ENCODE measurements at regions of chr2 and their contacts with region 1.

Region 1: GRCh38 chr2:231674587-231675338 is 33.6 kb upstream of the PTMA start:
- DNase-seq: peak; percentile 74
- ATAC-seq: peak; percentile 73
- H3K4me3 Mint-ChIP-seq: no peak overlapping the region
- H3K27ac Mint-ChIP-seq: peak overlapping the region; percentile 57
- H3K4me1 Mint-ChIP-seq: peaks cover 36% of the 10 kb centered on the region
- H3K27me3 Mint-ChIP-seq: peaks cover 2% of the 10 kb centered on the region

Region 2: DNA sequence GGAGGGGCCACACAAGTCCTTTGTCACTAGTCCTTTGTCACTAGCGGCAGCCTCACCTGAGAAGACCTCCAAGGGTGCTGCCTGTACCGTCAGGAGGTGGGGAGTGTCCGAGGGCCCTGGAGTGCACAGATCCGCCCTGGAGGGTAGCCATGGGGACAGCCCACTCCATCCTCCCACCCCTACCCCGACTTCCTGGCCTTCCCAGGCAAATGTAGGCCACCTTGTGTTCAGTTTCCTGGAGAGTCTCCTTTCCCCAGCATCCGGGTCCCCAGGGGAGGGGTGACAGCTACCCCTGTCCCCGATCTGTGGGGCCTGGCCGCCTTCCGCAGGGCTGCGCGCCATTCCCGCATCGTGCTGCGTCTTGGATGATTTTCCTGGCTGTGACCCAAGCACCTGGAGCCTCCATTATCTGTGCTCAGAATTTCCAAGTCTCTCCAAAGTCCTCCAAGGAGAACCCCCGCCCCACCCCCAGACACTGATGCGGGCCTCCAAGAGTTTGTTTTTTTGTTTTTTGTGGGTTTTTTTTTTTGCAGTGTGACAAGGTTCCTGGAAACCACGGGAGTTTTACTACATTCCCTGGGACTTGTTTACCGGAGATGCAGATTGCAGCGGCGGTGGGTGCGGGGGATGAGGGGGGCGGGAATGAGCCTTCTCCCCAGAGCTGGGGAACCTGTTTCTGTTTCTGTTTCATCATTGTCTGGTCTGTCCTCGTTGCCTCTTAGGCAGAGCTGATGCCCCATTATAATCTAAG is 53.5 kb before region 1 on chr2:
- CTCF ChIA-PET with region 1: interaction called, 12 read pairs
- POLR2A ChIA-PET with region 1: no interaction called
- DNase-seq: no peak
- ATAC-seq: no peak
- H3K4me3 Mint-ChIP-seq: no peak overlapping the region
- H3K27ac Mint-ChIP-seq: no peak overlapping the region
- H3K4me1 Mint-ChIP-seq: peaks cover 37% of the 10 kb centered on the region
- H3K27me3 Mint-ChIP-seq: no peaks in the 10 kb centered on the region

Region 3: DNA sequence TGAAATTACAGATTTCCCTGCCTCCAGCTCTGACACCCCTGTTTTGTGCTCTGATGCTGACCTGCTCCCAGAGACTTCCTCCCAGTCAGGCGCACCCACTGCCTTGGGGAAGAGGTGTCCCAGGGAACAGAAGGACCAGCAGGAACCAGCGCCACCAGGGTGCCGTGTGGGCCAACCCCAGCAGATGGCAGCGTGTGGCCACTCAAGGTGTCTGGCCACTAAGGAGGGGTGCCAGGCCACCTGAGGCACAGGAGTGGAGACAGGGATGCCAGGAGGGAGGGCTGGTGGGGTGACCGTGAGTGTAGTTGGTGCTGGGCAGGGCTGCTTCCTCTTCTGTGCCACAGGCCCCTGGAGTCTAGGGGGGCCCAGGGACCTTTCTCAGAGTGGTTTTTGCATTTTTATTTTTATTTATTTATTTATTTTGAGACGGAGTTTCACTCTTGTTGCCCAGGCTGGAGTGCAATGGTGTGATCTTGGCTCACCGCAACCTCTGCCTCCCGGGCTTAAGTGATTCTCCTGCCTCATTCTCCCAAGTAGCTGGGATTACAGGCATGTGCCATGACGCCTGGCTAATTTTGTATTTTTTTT is 26.1 kb before region 1 on chr2:
- CTCF ChIA-PET with region 1: interaction called, 91 read pairs
- POLR2A ChIA-PET with region 1: no interaction called
- DNase-seq: peak; percentile 67
- ATAC-seq: peak; percentile 86
- H3K4me3 Mint-ChIP-seq: no peak overlapping the region
- H3K27ac Mint-ChIP-seq: no peak overlapping the region
- H3K4me1 Mint-ChIP-seq: peaks cover 5% of the 10 kb centered on the region
- H3K27me3 Mint-ChIP-seq: no peaks in the 10 kb centered on the region

Region 4: GRCh38 chr2:231662028-231662810 is 12.5 kb before region 1 on chr2:
- CTCF ChIA-PET with region 1: interaction called, 65 read pairs
- POLR2A ChIA-PET with region 1: interaction called, 5 read pairs
- DNase-seq: peak; percentile 97
- ATAC-seq: peak; percentile 96
- H3K4me3 Mint-ChIP-seq: peak overlapping the region; percentile 71
- H3K27ac Mint-ChIP-seq: peak overlapping the region; percentile 94
- H3K4me1 Mint-ChIP-seq: peaks cover 38% of the 10 kb centered on the region
- H3K27me3 Mint-ChIP-seq: no peaks in the 10 kb centered on the region

Region 5: GRCh38 chr2:231706731-231707624 is 32.2 kb after region 1 on chr2:
- CTCF ChIA-PET with region 1: interaction called, 648 read pairs
- POLR2A ChIA-PET with region 1: interaction called, 67 read pairs
- DNase-seq: peak; percentile 98
- ATAC-seq: peak; percentile 38
- H3K4me3 Mint-ChIP-seq: peak overlapping the region; percentile 97
- H3K27ac Mint-ChIP-seq: peak overlapping the region; percentile 100
- H3K4me1 Mint-ChIP-seq: peaks cover 22% of the 10 kb centered on the region
- H3K27me3 Mint-ChIP-seq: no peaks in the 10 kb centered on the region

Measured in activated CD8-positive, alpha-beta T cell treated with anti-CD3 and anti-CD28 coated beads, Interleukin-2, amount 10 ng/mL, durations not matched to agents 7 days and 5 days (primary cell).